Activated T-helper 2 cell treated with anti-CD3 and anti-CD28 coated beads, Interferon-gamma antibody, Interleukin-2, Interleukin-4, amounts not matched to agents 10 μg/mL and 5 μg/mL and 100 μg/mL, durations not matched to agents 14 hours and 24 hours and 36 hours (primary cell): ENCODE measurements at regions of chr3 and their contacts with region 1.

Region 1: GRCh38 chr3:152444029-152444641 is 175.4 kb downstream of the MBNL1 start:
- DNase-seq: no peak
- H3K4me3 Mint-ChIP-seq: no peak overlapping the region
- H3K27ac Mint-ChIP-seq: peak overlapping the region; percentile 14
- H3K4me1 Mint-ChIP-seq: peaks cover 51% of the 10 kb centered on the region
- H3K27me3 Mint-ChIP-seq: no peaks in the 10 kb centered on the region

Region 2: DNA sequence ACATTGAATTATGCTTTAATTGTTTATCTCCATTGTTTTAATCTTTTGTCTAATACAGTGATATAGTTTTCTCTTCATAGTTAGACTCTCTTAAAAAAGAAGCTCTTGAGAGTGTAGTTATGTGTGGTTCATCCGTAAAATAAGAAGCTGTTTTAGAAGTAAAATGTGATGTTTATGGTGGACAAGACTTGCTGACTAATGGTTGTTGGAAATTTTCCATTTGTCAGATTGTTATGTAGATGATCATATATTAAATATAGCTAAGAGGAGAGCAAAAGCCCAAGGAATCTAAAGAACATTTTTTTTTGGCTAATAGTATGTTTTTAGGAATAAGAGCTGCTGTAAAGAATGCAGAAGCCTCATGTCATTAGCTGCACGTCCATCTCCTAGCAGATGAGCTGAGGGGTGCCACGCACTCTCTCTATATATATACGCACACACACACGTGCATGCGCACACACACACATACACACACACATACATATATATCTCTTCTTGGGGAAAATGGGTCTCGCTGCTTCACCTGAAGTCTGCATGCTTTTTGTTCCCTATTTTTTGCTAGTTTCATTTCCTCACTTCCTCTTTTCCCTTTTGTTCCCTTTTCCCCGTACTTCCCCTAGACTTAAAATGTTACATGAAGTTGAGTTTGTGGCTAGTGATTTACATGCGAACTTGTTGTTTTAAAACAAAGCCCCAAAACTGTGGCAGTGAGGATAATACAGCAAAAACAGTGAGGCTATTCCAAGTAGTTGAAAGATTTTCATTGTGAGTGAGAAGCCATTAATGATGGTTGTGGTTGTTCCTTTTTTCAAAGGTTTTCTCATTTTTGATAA is 67.6 kb before region 1 on chr3:
- intact Hi-C with region 1: loop called (anchors 5 kb)
- DNase-seq: no peak
- H3K4me3 Mint-ChIP-seq: no peak overlapping the region
- H3K27ac Mint-ChIP-seq: peak overlapping the region; percentile 37
- H3K4me1 Mint-ChIP-seq: peaks cover 29% of the 10 kb centered on the region
- H3K27me3 Mint-ChIP-seq: no peaks in the 10 kb centered on the region

Region 3: DNA sequence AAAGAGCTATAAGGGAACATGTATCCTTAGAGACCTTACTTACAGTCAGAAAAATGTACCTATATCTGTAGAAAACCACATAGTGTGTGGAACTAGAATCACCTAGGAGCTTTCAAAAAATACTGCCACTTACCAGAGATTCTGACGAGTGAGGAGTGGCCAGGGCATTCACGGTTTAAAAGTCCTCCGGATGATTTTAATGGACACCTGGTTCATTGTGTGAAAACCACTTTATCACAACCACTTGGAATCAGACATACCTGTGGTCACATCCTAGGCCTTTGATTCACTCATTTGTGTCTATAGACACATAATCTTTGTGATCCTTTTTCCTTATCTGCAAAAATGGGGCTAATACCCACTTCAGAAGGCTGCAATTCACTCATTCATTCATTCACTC is 15.6 kb before region 1 on chr3:
- intact Hi-C with region 1: loop called (anchors 2 kb)
- DNase-seq: no peak
- H3K4me3 Mint-ChIP-seq: no peak overlapping the region
- H3K27ac Mint-ChIP-seq: no peak overlapping the region
- H3K4me1 Mint-ChIP-seq: peaks cover 32% of the 10 kb centered on the region
- H3K27me3 Mint-ChIP-seq: no peaks in the 10 kb centered on the region